B cell (primary cell): ENCODE measurements at regions of chr1 and their contacts with region 1.

Region 1: GRCh38 chr1:111656086-111657017 is 36.8 kb downstream of the RAP1A start:
- DNase-seq: peak; percentile 66
- ATAC-seq: no peak
- H3K4me3 ChIP-seq: no peak overlapping the region
- H3K4me3 Mint-ChIP-seq: no peak overlapping the region
- H3K27ac ChIP-seq: no peak overlapping the region
- H3K27ac Mint-ChIP-seq: no peak overlapping the region
- H3K4me1 ChIP-seq: peaks cover 30 to 33% of the 10 kb centered on the region in 2 donors
- H3K4me1 Mint-ChIP-seq: peaks cover 37% of the 10 kb centered on the region
- H3K27me3 ChIP-seq: no peaks in the 10 kb centered on the region
- H3K27me3 Mint-ChIP-seq: no peaks in the 10 kb centered on the region
- CTCF ChIP-seq: peak; percentile 75

Region 2: DNA sequence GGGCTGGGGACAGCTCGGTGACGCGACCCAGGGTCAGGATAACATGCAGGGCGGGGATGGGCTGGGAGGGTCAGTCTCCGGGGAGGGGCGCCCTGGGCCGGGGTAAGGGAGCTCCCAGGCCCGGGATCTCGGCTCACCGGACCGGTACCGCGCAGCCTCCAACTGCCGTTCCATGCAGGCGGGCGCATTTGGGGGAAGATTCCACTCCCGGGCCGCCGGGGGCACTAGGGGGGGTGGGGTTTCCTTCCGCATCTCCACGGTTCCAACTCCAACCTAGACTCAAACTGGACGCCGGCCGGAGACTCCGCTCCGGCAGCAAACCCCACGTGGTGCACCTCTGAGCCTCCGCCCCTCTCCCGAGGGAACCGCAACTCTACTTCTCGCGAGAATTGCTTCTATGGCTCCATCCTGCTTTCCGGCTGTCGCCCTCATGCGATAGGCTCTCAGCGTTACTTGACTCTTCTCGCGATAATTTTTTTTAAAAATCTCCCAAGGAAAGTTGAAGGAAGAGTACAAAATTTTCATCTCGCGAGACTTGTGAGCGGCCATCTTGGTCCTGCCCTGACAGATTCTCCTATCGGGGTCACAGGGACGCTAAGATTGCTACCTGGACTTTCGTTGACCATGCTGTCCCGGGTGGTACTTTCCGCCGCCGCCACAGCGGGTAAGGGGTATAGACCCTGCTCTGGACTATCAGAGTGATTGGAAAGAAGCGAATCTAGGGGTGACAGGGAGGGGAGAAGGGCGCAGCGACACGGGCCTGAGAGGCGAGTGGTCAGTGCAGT is 207.2 kb before region 1 on chr1 and contains the starts of genes ATP5PB and WDR77:
- CTCF ChIA-PET with region 1: no interaction called
- POLR2A ChIA-PET with region 1: no interaction called
- intact Hi-C with region 1: loop called (anchors 5 kb)
- DNase-seq: peak; percentile 96
- ATAC-seq: peak; percentile 95
- H3K4me3 ChIP-seq: peak within 1 kb of the TSS; percentile 76 to 94 (median 85)
- H3K4me3 Mint-ChIP-seq: peak within 1 kb of the TSS; percentile 100
- H3K27ac ChIP-seq: peak within 1 kb of the TSS; percentile 60 to 95
- H3K27ac Mint-ChIP-seq: peak within 1 kb of the TSS; percentile 99
- H3K4me1 ChIP-seq: peaks cover 41 to 48% of the 10 kb centered on the region in 2 donors
- H3K4me1 Mint-ChIP-seq: peaks cover 73% of the 10 kb centered on the region
- H3K27me3 ChIP-seq: no peaks in the 10 kb centered on the region
- H3K27me3 Mint-ChIP-seq: no peaks in the 10 kb centered on the region
- CTCF ChIP-seq: no peak
- total RNA-seq, gene ATP5PB: 110 and 113 TPM in 2 replicates
- total RNA-seq, gene WDR77: 40.5 and 41.4 TPM in 2 replicates

Region 3: DNA sequence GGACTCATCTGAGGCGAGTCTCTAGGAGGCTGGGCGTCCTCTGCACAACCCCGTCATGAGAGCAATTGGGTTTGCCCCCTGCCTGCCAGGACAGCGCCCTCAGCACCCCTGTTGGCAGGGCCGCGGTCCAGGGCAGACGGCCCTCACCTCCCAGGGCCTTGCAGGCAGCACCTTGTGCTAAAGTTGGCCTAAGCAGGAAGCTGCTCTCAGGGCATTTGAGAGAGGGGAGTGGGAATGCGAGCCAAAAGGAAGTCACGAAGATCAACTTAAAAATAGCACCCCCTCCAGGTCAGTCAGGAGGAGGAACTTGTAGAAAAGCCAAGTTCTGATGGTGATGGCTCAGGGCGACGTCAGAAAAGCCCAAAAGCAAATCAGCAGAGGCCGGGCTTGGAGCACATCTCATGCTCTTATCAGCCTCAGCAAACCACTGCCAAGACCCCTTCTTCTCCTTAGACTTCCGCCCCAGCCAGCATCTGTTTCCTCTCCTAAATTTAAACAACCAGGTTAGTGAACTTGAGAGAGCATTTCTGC is 140.3 kb before region 1 on chr1:
- CTCF ChIA-PET with region 1: interaction called, 10 read pairs
- POLR2A ChIA-PET with region 1: no interaction called
- intact Hi-C with region 1: no loop called
- DNase-seq: peak; percentile 86
- ATAC-seq: peak; percentile 75
- H3K4me3 ChIP-seq: peak overlapping the region; percentile 55 to 75 (median 61)
- H3K4me3 Mint-ChIP-seq: peak overlapping the region; percentile 90
- H3K27ac ChIP-seq: peak overlapping the region; percentile 81
- H3K27ac Mint-ChIP-seq: peak overlapping the region; percentile 84
- H3K4me1 ChIP-seq: peaks cover 30 to 34% of the 10 kb centered on the region in 2 donors
- H3K4me1 Mint-ChIP-seq: peaks cover 37% of the 10 kb centered on the region
- H3K27me3 ChIP-seq: no peaks in the 10 kb centered on the region
- H3K27me3 Mint-ChIP-seq: no peaks in the 10 kb centered on the region
- CTCF ChIP-seq: peak; percentile 74

Region 4: DNA sequence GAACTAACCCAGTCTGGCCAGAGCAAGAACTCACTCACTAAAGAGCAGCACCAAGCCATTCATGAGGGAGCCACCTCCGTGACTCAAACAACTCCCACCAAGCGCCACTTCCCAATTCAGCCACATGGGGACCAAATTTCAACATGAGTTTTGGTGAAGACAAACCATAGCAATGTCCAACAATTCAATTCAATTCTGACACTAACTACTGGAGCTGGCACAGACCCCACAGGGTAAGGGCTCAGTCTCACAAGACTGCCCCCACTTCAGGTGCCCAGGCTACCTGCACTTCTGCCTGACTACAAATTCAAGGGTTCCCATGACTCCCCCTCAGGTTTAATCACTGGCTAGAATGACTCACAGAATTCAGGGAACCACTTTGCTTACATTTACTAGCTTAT is 85.6 kb before region 1 on chr1:
- CTCF ChIA-PET with region 1: interaction called, 6 read pairs
- POLR2A ChIA-PET with region 1: no interaction called
- intact Hi-C with region 1: loop called (anchors 1 kb)
- DNase-seq: peak; percentile 48
- ATAC-seq: peak; percentile 43
- H3K4me3 ChIP-seq: no peak overlapping the region
- H3K4me3 Mint-ChIP-seq: no peak overlapping the region
- H3K27ac ChIP-seq: no peak overlapping the region
- H3K27ac Mint-ChIP-seq: peak overlapping the region; percentile 26
- H3K4me1 ChIP-seq: peaks cover 6 to 14% of the 10 kb centered on the region in 2 donors
- H3K4me1 Mint-ChIP-seq: peaks cover 15% of the 10 kb centered on the region
- H3K27me3 ChIP-seq: no peaks in the 10 kb centered on the region
- H3K27me3 Mint-ChIP-seq: no peaks in the 10 kb centered on the region
- CTCF ChIP-seq: peak; percentile 53

Region 5: DNA sequence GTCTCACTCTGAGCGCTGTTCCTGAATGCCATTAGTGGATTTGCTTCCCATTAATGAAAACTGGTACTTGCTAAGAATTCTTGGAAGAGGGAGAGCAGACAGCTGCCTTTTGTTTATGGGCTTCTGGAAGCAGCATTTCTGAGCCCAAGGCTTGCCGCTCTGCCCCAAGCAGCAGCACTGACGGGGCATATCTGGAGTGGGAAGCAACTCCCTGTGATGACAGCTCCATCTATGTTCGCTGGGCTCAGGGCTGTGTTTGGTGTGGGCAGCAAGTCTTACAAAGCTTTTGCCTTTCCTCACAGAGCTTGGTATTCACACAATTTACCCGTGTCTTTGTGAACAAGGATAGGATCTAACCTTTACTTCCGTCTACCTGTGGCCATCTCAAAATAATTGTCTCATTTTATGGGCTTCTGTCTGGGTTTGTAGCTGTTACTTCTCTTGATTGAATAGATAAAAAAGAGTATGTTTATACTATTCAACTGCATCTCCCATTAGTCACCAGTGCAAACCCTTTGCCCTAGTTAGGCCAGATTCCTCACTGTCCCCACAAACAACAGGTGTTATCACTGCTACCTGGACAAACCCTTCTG is 171.7 kb after region 1 on chr1:
- CTCF ChIA-PET with region 1: no interaction called
- POLR2A ChIA-PET with region 1: no interaction called
- intact Hi-C with region 1: no loop called
- DNase-seq: no peak
- ATAC-seq: no peak
- H3K4me3 ChIP-seq: no peak overlapping the region
- H3K4me3 Mint-ChIP-seq: no peak overlapping the region
- H3K27ac ChIP-seq: no peak overlapping the region
- H3K27ac Mint-ChIP-seq: no peak overlapping the region
- H3K4me1 ChIP-seq: no peaks in the 10 kb centered on the region
- H3K4me1 Mint-ChIP-seq: no peaks in the 10 kb centered on the region
- H3K27me3 ChIP-seq: peaks cover 0 to 21% (median 2%) of the 10 kb centered on the region in 4 experiments
- H3K27me3 Mint-ChIP-seq: peaks cover 60% of the 10 kb centered on the region
- CTCF ChIP-seq: no peak